ENCODE measurements at regions of chr1 and their contacts with region 1.

Region 1: GRCh38 chr1:54355931-54356679 is 50.1 kb downstream of the SSBP3 start:
- DNase-seq: no peak
- ATAC-seq: peak; percentile 65
- H3K4me3 Mint-ChIP-seq: peak overlapping the region; percentile 84
- H3K27ac Mint-ChIP-seq: peak overlapping the region; percentile 50
- H3K4me1 Mint-ChIP-seq: peaks cover 22% of the 10 kb centered on the region
- H3K27me3 Mint-ChIP-seq: peaks cover 1% of the 10 kb centered on the region
- CTCF ChIP-seq: no peak

Region 2: DNA sequence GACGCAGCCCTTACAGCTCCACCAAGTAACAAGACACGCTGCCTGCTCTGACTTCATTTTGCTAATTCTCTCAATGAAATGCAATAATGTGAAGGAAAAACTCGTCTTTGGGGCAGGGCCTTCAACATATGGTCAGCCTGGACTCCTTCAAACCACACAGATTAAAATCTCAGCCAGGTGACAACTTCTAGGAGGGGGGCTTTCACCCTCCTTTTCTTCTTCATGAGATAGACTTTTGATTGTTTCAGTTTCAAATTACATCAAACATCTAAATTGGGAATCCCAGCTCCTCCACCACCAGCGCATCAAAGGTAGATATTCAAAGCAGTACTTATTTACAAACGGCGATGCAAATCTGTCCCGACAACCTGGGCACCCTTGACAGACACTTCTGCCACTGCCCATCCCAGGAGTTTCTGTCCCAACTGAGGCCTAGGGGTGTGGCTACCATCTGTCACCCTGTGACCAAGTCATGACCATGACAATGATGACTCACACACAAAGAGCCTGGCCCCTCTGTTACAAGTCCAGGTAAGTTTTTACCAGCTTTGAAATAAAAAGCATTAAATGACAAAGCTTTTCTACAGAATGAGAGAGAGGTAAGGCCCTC is 20.4 kb after region 1 on chr1:
- CTCF ChIA-PET with region 1: no interaction called
- POLR2A ChIA-PET with region 1: interaction called, 4 read pairs
- intact Hi-C with region 1: loop called (anchors 2 kb)
- DNase-seq: no peak
- ATAC-seq: peak; percentile 78
- H3K4me3 Mint-ChIP-seq: peak overlapping the region; percentile 36
- H3K27ac Mint-ChIP-seq: peak overlapping the region; percentile 85
- H3K4me1 Mint-ChIP-seq: peaks cover 65% of the 10 kb centered on the region
- H3K27me3 Mint-ChIP-seq: no peaks in the 10 kb centered on the region
- CTCF ChIP-seq: no peak

Region 3: DNA sequence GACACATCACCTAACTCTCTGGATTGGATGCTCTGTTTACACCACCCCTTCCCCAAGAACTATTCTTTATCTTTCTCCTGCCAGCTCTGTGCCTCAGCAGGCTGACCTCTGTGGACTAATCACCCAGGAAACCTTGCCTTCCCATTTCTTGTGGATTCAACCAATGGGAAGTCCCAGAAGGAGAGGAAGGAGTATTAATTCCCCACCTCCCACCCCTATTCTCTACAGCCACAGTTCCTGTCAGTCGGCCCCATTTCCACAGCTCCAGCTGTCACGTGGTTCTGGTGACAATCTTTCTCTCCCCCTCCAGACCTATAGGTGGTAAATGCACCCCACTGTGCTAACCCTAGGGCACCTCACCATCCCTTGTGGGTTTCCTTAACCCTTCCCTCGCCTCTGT is 96.9 kb after region 1 on chr1:
- CTCF ChIA-PET with region 1: no interaction called
- POLR2A ChIA-PET with region 1: no interaction called
- intact Hi-C with region 1: no loop called
- DNase-seq: no peak
- ATAC-seq: no peak
- H3K4me3 Mint-ChIP-seq: no peak overlapping the region
- H3K27ac Mint-ChIP-seq: no peak overlapping the region
- H3K4me1 Mint-ChIP-seq: no peaks in the 10 kb centered on the region
- H3K27me3 Mint-ChIP-seq: peaks cover 18% of the 10 kb centered on the region
- CTCF ChIP-seq: no peak